Right ventricle myocardium inferior (tissue), 1 donor: ENCODE measurements at regions of chr18 and their contacts with region 1.

Region 1: GRCh38 chr18:12947355-12948041 is at the start of gene SEH1L:
- DNase-seq: peak; percentile 100
- ATAC-seq: peak; percentile 98
- total RNA-seq, gene SEH1L: 19.7 TPM

Region 2: GRCh38 chr18:12883684-12884405 is 63.7 kb before region 1 on chr18 and contains the start of gene PTPN2:
- intact Hi-C with region 1: loop called (anchors 2 kb)
- DNase-seq: peak; percentile 97
- ATAC-seq: peak; percentile 96
- total RNA-seq, gene PTPN2: 11.2 TPM

Region 3: GRCh38 chr18:12990967-12991838 is 43.7 kb after region 1 on chr18 and contains the start of gene CEP192:
- intact Hi-C with region 1: loop called (anchors 5 kb)
- DNase-seq: peak; percentile 98
- ATAC-seq: peak; percentile 99
- total RNA-seq, gene CEP192: 25.6 TPM